ENCODE measurements at regions of chr5 and their contacts with region 1.

Region 1: GRCh38 chr5:57082441-57083067 is 91.3 kb upstream of the GPBP1 start:
- DNase-seq: peak; percentile 14
- H3K4me3 Mint-ChIP-seq: no peak overlapping the region
- H3K27ac Mint-ChIP-seq: no peak overlapping the region
- H3K4me1 Mint-ChIP-seq: no peaks in the 10 kb centered on the region
- H3K27me3 Mint-ChIP-seq: no peaks in the 10 kb centered on the region
- CTCF ChIP-seq: peak; percentile 22

Region 2: DNA sequence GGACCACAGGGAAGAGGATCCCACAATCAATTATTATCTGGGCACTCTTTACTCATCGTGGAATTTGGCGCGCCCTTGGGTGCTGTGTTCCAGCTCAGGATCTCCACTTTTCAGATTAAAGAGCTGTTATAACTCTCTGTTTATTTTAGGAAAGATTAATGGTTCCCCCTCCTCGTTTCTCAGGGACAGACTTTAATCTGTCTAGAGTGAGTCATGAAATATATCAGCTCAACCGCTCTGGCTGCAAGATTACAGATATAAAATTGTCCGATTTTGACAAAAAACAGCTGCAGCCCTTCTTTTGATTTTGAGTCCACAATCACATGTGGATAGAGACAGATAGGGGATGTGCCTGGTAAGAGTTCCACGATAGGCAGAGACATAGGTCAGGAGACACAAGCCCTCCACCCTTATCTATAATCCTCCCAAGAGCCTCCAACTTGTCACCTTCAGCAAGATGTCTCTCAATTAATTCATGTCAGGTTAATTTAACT is 771.8 kb before region 1 on chr5:
- CTCF ChIA-PET with region 1: no interaction called
- intact Hi-C with region 1: no loop called
- DNase-seq: no peak
- H3K4me3 Mint-ChIP-seq: peak overlapping the region; percentile 37
- H3K27ac Mint-ChIP-seq: peak overlapping the region; percentile 12
- H3K4me1 Mint-ChIP-seq: peaks cover 68% of the 10 kb centered on the region
- H3K27me3 Mint-ChIP-seq: no peaks in the 10 kb centered on the region
- CTCF ChIP-seq: no peak

Region 3: GRCh38 chr5:56951946-56952691 is 130.4 kb before region 1 on chr5 and contains the start of gene MIER3:
- CTCF ChIA-PET with region 1: no interaction called
- intact Hi-C with region 1: loop called (anchors 2 kb)
- DNase-seq: peak; percentile 83
- H3K4me3 Mint-ChIP-seq: peak within 1 kb of the TSS; percentile 82
- H3K27ac Mint-ChIP-seq: peak within 1 kb of the TSS; percentile 28
- H3K4me1 Mint-ChIP-seq: peaks cover 22% of the 10 kb centered on the region
- H3K27me3 Mint-ChIP-seq: no peaks in the 10 kb centered on the region
- CTCF ChIP-seq: no peak
- total RNA-seq, gene MIER3: 24.1 and 26.3 TPM in 2 replicates

Region 4: GRCh38 chr5:57004800-57005199 is 77.8 kb before region 1 on chr5:
- CTCF ChIA-PET with region 1: no interaction called
- intact Hi-C with region 1: loop called (anchors 2 kb)
- DNase-seq: peak; percentile 16
- H3K4me3 Mint-ChIP-seq: peak overlapping the region; percentile 4
- H3K27ac Mint-ChIP-seq: peak overlapping the region; percentile 68
- H3K4me1 Mint-ChIP-seq: peaks cover 41% of the 10 kb centered on the region
- H3K27me3 Mint-ChIP-seq: no peaks in the 10 kb centered on the region
- CTCF ChIP-seq: no peak

Region 5: DNA sequence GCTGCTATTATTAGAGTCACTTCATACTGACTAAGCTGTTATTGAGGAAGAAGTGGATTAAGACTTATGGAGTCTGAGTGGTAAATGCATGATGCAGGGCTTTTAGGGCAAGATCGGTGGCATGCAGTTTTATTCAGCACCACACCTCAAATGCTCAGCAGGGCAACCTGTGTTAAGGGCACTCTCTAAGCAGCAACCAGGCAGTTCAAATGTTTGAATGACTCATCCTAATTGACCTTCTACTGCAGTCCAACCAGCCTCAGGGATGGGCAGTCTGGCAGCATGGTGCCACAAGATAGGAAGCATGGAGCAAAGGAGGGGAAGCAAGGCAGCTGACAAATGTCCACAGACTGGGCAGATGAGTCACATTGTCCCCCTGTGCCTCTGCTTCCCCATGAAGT is 50.4 kb before region 1 on chr5:
- CTCF ChIA-PET with region 1: no interaction called
- intact Hi-C with region 1: loop called (anchors 5 kb)
- DNase-seq: peak; percentile 60
- H3K4me3 Mint-ChIP-seq: no peak overlapping the region
- H3K27ac Mint-ChIP-seq: peak overlapping the region; percentile 34
- H3K4me1 Mint-ChIP-seq: peaks cover 62% of the 10 kb centered on the region
- H3K27me3 Mint-ChIP-seq: no peaks in the 10 kb centered on the region
- CTCF ChIP-seq: no peak